Activated CD4-positive, alpha-beta memory T cell treated with anti-CD3 and anti-CD28 coated beads, Interleukin-2, amount 10 ng/mL, durations not matched to agents 7 days and 5 days (primary cell): ENCODE measurements at regions of chr3 and their contacts with region 1.

Region 1: GRCh38 chr3:196518966-196519717 is 4.0 kb upstream of the SMCO1 start:
- DNase-seq: peak; percentile 71
- H3K4me3 Mint-ChIP-seq: no peak overlapping the region
- H3K27ac Mint-ChIP-seq: no peak overlapping the region
- H3K4me1 Mint-ChIP-seq: peaks cover 2% of the 10 kb centered on the region
- H3K27me3 Mint-ChIP-seq: peaks cover 2% of the 10 kb centered on the region

Region 2: DNA sequence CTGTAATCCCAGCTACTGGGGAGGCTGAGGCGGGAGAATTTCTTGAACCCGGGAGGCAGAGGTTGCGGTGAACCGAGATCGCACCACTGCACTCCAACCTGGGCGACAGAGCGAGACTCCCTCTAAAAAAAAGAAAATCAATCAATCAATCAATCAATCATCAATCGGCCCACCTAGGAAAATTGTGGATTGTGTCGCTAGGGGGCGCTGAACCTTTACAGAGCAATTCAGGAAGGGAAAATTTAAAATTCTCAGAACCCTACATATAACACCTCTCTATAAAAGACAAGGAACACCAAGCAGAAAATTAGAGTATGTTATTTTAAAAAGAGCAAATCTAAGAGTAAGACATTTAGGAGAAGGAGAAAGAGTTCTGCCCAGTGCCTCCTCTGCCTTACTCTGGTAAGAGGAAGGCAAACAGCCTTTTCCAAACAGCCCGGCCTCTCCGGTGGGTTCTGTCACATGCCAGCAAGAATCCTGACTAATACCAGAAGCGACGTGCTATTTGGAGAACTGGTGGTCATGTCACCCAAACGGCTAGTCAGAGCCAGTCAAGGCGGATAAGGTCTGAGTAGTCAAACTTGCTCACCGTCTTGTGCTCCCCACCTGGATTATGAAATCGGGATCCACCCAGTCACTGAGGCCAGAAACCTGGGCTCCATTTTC is 18.3 kb after region 1 on chr3:
- CTCF ChIA-PET with region 1: interaction called, 12 read pairs
- POLR2A ChIA-PET with region 1: no interaction called
- DNase-seq: peak; percentile 74
- H3K4me3 Mint-ChIP-seq: no peak overlapping the region
- H3K27ac Mint-ChIP-seq: no peak overlapping the region
- H3K4me1 Mint-ChIP-seq: peaks cover 9% of the 10 kb centered on the region
- H3K27me3 Mint-ChIP-seq: peaks cover 3% of the 10 kb centered on the region